CD4-positive, alpha-beta memory T cell (primary cell): ENCODE measurements at regions of chr19 and their contacts with region 1.

Region 1: DNA sequence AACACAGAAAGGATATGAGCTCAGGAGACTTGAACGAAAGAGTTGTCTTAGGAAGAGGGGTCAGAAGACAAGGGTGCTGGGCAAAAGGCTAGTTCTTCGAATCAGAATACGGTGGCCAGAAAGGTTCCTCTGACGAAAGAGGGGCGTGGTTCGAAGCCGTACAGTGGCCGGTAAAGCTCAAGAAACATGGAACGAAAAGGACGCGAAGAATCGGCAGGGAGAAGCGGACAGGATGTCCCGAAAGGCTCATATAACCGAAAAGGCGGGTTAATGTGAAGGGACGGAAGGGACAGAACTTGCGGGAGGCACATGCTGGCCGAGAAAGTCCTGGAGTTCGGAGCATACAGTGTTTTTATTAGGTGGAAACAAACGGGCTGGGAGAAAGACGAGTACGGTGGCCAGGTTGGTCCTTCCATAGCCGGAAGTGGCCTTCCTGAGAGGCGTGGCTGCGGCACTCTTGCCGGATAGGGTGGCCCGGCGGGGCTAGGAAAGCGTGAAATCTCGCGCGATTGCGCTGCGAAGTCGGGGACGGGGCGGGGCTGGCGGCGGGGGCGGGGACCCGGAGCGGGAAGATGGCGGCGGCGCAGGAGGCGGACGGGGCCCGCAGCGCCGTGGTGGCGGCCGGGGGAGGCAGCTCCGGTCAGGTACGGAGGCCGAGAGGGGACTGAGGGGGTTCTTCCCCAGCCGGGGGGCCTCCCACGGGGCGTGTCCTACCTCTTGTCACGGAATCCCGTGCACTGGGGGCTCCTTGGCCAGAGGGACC is at the start of gene CLPTM1:
- DNase-seq: peak; percentile 96
- H3K4me3 ChIP-seq: peak within 1 kb of the TSS; percentile 87 to 96
- H3K4me3 Mint-ChIP-seq: peak within 1 kb of the TSS; percentile 92 to 99 (median 98)
- H3K27ac ChIP-seq: peak within 1 kb of the TSS; percentile 91
- H3K27ac Mint-ChIP-seq: peak within 1 kb of the TSS; percentile 96 to 99 (median 98)
- H3K4me1 ChIP-seq: peaks cover 43% of the 10 kb centered on the region
- H3K4me1 Mint-ChIP-seq: peaks cover 32 to 55% (median 46%) of the 10 kb centered on the region in 4 donors
- H3K27me3 ChIP-seq: no peaks in the 10 kb centered on the region
- H3K27me3 Mint-ChIP-seq: no peaks in the 10 kb centered on the region
- total RNA-seq, gene CLPTM1: 85.1 to 86.4 TPM

Region 2: GRCh38 chr19:44890366-44891015 is 64.5 kb before region 1 on chr19:
- CTCF ChIA-PET with region 1: interaction called, 5 read pairs
- POLR2A ChIA-PET with region 1: interaction called, 13 read pairs
- intact Hi-C with region 1: loop called (anchors 1 kb)
- DNase-seq: peak; percentile 100
- H3K4me3 ChIP-seq: peak overlapping the region; percentile 36 to 59
- H3K4me3 Mint-ChIP-seq: peak overlapping the region; percentile 80 to 95 (median 89)
- H3K27ac ChIP-seq: peak overlapping the region; percentile 83
- H3K27ac Mint-ChIP-seq: peak overlapping the region; percentile 83 to 97 (median 95)
- H3K4me1 ChIP-seq: peaks cover 22% of the 10 kb centered on the region
- H3K4me1 Mint-ChIP-seq: peaks cover 19 to 35% (median 28%) of the 10 kb centered on the region in 4 donors
- H3K27me3 ChIP-seq: no peaks in the 10 kb centered on the region
- H3K27me3 Mint-ChIP-seq: no peaks in the 10 kb centered on the region

Region 3: DNA sequence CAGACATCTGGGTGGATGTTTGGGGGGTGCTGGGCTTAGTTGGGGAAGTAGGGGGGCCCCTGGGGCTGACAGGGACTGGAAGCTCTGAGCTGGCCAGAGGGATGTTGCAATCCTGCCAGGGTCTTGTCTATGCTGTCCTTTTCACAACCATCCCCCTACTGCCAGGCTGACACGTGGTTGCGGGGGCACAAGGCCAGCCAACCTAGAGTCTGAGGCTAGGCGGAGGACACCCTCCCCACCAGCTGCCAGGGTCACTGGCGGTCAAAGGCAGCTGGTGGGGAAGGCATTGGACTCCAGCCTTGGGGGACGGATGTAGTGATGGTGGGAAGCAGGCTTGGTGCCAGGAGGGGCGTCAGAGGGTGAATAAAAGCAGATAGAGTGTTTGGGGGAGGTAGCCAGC is 42.2 kb before region 1 on chr19:
- CTCF ChIA-PET with region 1: no interaction called
- POLR2A ChIA-PET with region 1: no interaction called
- intact Hi-C with region 1: loop called (anchors 1 kb)
- DNase-seq: no peak
- H3K4me3 ChIP-seq: no peak overlapping the region
- H3K4me3 Mint-ChIP-seq: peak overlapping the region in 2 of 8 donors; percentile 59 to 71
- H3K27ac ChIP-seq: no peak overlapping the region
- H3K27ac Mint-ChIP-seq: no peak overlapping the region
- H3K4me1 ChIP-seq: peaks cover 6% of the 10 kb centered on the region
- H3K4me1 Mint-ChIP-seq: peaks cover 5 to 9% (median 7%) of the 10 kb centered on the region in 4 donors
- H3K27me3 ChIP-seq: no peaks in the 10 kb centered on the region
- H3K27me3 Mint-ChIP-seq: peaks cover 18 to 24% of the 10 kb centered on the region in 2 donors

Region 4: DNA sequence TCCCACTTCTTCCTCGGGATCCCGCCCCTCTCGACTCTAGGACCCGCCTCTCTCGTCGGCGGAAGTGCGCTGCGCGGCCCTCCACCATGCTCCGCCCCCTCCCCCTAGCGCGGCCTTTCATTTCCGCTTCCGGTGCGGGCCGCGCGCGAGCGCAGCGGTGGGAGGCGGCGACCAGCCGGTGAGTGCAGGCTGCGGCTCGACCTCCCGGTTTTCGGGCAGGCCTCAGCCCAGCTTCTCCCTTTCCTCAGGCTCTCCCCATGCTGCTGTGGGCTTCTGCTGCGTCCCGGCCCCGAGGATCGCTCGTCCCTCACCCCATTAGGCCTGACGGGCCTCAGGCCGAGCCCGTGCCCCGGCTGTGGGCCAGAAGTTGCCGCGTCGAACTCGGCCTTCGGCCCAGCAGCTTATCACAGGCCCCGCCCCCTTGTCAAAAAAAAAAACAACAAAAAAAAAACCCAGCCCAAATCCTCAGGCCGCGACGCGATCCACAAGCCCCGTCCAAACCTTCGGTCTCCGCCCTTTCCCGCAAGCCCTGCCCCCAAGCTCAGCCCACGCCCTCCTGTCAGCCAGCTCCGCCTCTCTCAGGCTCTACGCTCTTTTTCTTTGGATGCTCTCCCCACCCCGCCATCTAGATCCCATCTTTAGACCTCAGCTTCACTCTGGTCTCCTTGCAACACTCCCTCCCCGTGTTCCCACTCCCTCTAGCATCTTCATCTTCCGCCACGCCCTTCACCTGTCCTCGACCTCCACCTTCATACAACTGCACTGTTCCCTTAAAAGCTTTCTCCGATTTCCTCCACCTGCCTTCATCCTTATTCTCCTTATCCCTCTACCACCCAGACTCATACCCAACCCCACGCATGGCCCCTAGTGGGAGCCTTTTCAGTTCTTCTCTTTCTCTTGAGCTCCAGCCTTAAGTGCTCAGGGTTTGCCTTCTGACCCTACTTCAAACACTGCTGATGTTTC is 84.2 kb after region 1 on chr19 and contains the start of gene CLASRP:
- CTCF ChIA-PET with region 1: interaction called, 3 read pairs
- POLR2A ChIA-PET with region 1: interaction called, 16 read pairs
- intact Hi-C with region 1: no loop called
- DNase-seq: peak; percentile 85 to 88 (median 86)
- H3K4me3 ChIP-seq: peak within 1 kb of the TSS; percentile 45 to 62
- H3K4me3 Mint-ChIP-seq: peak within 1 kb of the TSS; percentile 95 to 99 (median 98)
- H3K27ac ChIP-seq: peak within 1 kb of the TSS; percentile 98
- H3K27ac Mint-ChIP-seq: peak within 1 kb of the TSS; percentile 88 to 99 (median 98)
- H3K4me1 ChIP-seq: peaks cover 34% of the 10 kb centered on the region
- H3K4me1 Mint-ChIP-seq: peaks cover 21 to 46% (median 29%) of the 10 kb centered on the region in 4 donors
- H3K27me3 ChIP-seq: no peaks in the 10 kb centered on the region
- H3K27me3 Mint-ChIP-seq: no peaks in the 10 kb centered on the region
- total RNA-seq, gene CLASRP: 156 to 163 TPM